ENCODE measurements at regions of chr3 and their contacts with region 1.

Region 1: DNA sequence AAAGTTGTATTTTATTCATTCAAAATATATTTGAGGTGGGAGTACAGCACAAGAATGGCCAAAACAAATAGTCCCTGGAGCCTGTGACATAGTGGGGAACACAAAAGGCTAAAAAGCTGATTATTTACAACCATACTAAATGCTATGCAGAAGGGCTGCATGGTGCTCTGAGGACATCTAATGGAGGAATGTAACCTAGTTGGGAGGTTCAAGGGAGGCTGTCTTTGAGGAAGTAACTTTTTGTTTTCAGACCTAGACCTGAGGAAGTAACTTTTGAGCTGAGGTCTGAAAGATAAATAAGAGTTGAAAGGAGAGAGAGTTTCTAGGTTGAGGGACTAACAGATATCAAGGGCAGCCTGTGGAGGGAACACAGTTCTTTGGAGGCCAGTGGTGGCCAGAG is 34.8 kb upstream of the RASA2 start:
- DNase-seq: no peak
- ATAC-seq: peak; percentile 68
- H3K4me3 Mint-ChIP-seq: no peak overlapping the region
- H3K27ac Mint-ChIP-seq: no peak overlapping the region
- H3K4me1 Mint-ChIP-seq: peaks cover 14% of the 10 kb centered on the region
- H3K27me3 Mint-ChIP-seq: peaks cover 4% of the 10 kb centered on the region; the same call in 1 of the 2 replicates
- CTCF ChIP-seq: no peak

Region 2: DNA sequence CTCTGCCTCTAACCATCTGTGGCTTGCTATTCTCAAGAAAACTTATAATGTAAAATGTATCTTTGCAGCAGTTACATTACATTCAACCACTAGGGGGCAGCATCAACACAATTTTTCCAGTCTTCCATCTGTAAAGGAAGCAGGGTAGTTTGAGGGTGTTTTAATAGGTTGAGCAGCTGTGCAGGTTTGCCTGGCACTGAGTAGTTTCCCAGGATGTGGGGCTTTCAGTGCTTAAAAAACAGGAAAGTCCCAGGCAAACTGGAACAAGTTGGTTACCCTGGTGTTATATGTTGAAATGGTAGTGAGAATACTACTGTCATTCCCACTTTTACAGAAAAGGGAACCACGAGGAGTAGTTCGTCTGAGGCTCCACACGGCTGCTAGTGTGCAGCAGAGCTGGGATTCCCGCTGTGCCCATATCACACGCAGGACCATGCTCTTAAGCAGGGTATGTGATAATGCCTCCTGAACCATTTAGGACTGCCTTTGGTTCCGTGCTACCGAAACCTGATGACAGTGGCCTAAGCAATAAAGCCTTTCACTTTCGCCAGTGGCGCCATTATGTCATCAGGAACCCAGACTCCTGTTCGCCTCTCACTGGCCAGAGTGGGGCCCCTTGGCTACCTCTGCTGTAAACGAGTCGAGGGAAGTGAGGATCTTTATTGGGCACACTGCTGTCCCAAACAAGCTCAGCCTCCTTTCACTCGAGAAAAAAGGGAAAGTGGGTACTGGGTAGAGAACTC is 148.4 kb before region 1 on chr3:
- CTCF ChIA-PET with region 1: interaction called, 97 read pairs
- POLR2A ChIA-PET with region 1: no interaction called
- DNase-seq: peak; percentile 33
- ATAC-seq: peak; percentile 77
- H3K4me3 Mint-ChIP-seq: no peak overlapping the region
- H3K27ac Mint-ChIP-seq: no peak overlapping the region
- H3K4me1 Mint-ChIP-seq: peaks cover 4% of the 10 kb centered on the region
- H3K27me3 Mint-ChIP-seq: peaks cover 28% of the 10 kb centered on the region
- CTCF ChIP-seq: peak; percentile 66

Region 3: GRCh38 chr3:141441381-141442364 is 10.4 kb before region 1 on chr3:
- CTCF ChIA-PET with region 1: interaction called, 18 read pairs
- POLR2A ChIA-PET with region 1: interaction called, 4 read pairs
- DNase-seq: peak; percentile 75
- ATAC-seq: peak; percentile 97
- H3K4me3 Mint-ChIP-seq: no peak overlapping the region
- H3K27ac Mint-ChIP-seq: 0 out of 2 replicates have a peak overlapping the region, but pooled peaks have one; percentile 79
- H3K4me1 Mint-ChIP-seq: peaks cover 8% of the 10 kb centered on the region
- H3K27me3 Mint-ChIP-seq: no peaks in the 10 kb centered on the region
- CTCF ChIP-seq: peak; percentile 77

Region 4: GRCh38 chr3:141561426-141562034 is 109.5 kb after region 1 on chr3:
- CTCF ChIA-PET with region 1: interaction called, 10 read pairs
- POLR2A ChIA-PET with region 1: no interaction called
- DNase-seq: no peak
- ATAC-seq: no peak; the same call in 1 of the 2 replicates
- H3K4me3 Mint-ChIP-seq: no peak overlapping the region
- H3K27ac Mint-ChIP-seq: no peak overlapping the region
- H3K4me1 Mint-ChIP-seq: no peaks in the 10 kb centered on the region
- H3K27me3 Mint-ChIP-seq: no peaks in the 10 kb centered on the region
- CTCF ChIP-seq: peak; percentile 90

Measured in WTC11 (cell line).